ENCODE measurements at regions of chr1 and their contacts with region 1.

Region 1: DNA sequence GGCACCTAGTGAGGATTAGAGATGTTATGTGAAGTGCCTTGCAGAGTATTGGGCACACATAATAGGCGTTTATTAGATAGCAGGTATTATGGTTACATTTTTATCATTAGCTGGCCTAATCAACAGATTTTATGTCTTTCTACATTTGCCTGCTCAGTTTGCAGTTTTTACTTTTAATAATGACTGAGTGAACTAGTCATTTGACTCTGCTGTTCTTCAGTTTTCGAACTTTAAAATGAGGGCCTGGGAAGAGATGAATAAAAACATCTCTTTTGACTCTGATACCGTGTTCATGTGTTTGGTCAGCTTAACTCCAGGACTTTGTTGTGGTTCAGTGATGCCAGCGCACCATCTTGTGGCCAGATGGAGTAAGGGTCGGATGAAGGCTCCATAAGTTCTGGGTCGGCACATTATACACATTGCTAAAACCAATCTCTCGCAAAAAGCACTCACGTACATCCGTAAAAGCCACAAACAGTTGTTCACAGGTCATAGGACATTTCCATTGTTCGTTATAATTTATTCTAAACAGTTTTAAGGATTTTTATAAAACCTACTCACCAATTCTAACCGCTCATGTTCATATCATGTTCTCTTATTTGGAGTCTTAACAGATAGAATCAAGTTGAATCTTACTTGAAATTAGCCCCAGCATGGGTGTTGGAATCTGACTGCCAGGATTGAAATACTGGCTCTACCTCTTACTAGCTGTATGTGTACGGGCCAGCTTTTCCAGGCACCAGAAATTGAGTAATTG is 78.4 kb upstream of the GPR88 start:
- H3K4me3 ChIP-seq: no peak overlapping the region
- H3K27ac ChIP-seq: no peak overlapping the region
- H3K4me1 ChIP-seq: no peaks in the 10 kb centered on the region
- CTCF ChIP-seq: peak; percentile 72

Region 2: GRCh38 chr1:99808391-99809115 is 651.0 kb before region 1 on chr1:
- CTCF ChIA-PET with region 1: interaction called, 14 read pairs
- POLR2A ChIA-PET with region 1: interaction called, 8 read pairs
- H3K4me3 ChIP-seq: no peak overlapping the region
- H3K27ac ChIP-seq: no peak overlapping the region
- H3K4me1 ChIP-seq: no peaks in the 10 kb centered on the region
- CTCF ChIP-seq: peak; percentile 62; the same call in 1 of the 2 replicates

Region 3: GRCh38 chr1:100061681-100062080 is 397.9 kb before region 1 on chr1:
- CTCF ChIA-PET with region 1: no interaction called
- POLR2A ChIA-PET with region 1: no interaction called
- H3K4me3 ChIP-seq: no peak overlapping the region
- H3K27ac ChIP-seq: no peak overlapping the region
- H3K4me1 ChIP-seq: 0 out of 2 replicates have a peak, but pooled peaks cover 5% of the 10 kb centered on the region
- CTCF ChIP-seq: no peak

Region 4: GRCh38 chr1:100430325-100430813 is 29.2 kb before region 1 on chr1:
- CTCF ChIA-PET with region 1: interaction called, 11 read pairs
- POLR2A ChIA-PET with region 1: no interaction called
- H3K4me3 ChIP-seq: no peak overlapping the region
- H3K27ac ChIP-seq: peak overlapping the region; percentile 13; the same call in 1 of the 2 replicates
- H3K4me1 ChIP-seq: no peaks in the 10 kb centered on the region
- CTCF ChIP-seq: no peak

Region 5: DNA sequence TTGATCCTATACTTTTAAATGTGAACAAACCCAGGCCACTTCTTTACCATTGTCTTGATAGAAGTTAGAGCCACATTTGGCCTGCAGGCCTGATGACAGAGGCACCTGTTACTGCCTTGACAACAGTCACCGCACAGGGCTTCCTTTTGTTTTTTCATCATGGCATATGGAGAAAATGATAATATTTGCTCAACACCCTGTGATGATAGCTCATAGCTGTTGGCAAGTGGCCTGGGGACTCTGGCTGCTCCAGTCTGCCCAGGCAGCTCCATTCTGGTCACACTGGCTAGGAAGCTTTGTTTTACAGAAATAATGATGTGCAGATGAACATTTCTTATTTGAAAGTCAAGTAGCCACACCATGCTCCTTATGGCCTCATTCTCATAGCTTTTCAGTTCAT is 11.2 kb before region 1 on chr1:
- CTCF ChIA-PET with region 1: interaction called, 16 read pairs
- POLR2A ChIA-PET with region 1: no interaction called
- H3K4me3 ChIP-seq: no peak overlapping the region
- H3K27ac ChIP-seq: no peak overlapping the region
- H3K4me1 ChIP-seq: no peaks in the 10 kb centered on the region
- CTCF ChIP-seq: no peak

Region 6: GRCh38 chr1:100474834-100475233 is 15.3 kb after region 1 on chr1:
- CTCF ChIA-PET with region 1: interaction called, 11 read pairs
- POLR2A ChIA-PET with region 1: no interaction called
- H3K4me3 ChIP-seq: no peak overlapping the region
- H3K27ac ChIP-seq: no peak overlapping the region
- H3K4me1 ChIP-seq: no peaks in the 10 kb centered on the region
- CTCF ChIP-seq: no peak

Region 7: DNA sequence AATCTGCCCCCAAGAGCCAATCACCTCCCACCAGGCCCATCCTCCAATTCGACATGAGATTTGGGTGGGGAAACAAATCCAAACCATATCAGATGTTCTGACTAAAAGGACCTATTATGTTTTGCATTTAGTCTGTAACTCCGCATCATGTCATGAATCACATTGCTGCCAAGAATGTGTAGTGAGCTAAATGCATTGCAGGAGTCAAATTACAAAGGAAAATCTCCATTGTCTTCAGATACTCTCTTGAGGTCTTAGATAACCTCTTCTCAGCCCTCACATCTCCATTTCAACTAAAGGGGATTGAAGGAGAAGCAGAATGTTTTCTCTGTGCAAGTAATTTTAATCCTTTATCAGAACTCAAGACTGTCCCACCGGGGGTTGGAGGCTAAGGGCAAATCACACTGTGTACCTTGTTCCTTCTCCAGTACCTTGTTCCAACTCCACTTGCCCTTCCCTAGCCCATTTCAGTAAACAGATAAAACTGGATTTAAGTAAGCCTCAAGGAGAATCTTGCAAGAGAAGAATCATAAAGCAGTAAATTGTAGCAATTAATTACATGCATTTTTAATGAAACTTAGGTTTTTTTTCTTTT is 401.0 kb after region 1 on chr1:
- CTCF ChIA-PET with region 1: interaction called, 10 read pairs
- POLR2A ChIA-PET with region 1: no interaction called
- H3K4me3 ChIP-seq: no peak overlapping the region
- H3K27ac ChIP-seq: no peak overlapping the region
- H3K4me1 ChIP-seq: no peaks in the 10 kb centered on the region
- CTCF ChIP-seq: no peak

Region 8: DNA sequence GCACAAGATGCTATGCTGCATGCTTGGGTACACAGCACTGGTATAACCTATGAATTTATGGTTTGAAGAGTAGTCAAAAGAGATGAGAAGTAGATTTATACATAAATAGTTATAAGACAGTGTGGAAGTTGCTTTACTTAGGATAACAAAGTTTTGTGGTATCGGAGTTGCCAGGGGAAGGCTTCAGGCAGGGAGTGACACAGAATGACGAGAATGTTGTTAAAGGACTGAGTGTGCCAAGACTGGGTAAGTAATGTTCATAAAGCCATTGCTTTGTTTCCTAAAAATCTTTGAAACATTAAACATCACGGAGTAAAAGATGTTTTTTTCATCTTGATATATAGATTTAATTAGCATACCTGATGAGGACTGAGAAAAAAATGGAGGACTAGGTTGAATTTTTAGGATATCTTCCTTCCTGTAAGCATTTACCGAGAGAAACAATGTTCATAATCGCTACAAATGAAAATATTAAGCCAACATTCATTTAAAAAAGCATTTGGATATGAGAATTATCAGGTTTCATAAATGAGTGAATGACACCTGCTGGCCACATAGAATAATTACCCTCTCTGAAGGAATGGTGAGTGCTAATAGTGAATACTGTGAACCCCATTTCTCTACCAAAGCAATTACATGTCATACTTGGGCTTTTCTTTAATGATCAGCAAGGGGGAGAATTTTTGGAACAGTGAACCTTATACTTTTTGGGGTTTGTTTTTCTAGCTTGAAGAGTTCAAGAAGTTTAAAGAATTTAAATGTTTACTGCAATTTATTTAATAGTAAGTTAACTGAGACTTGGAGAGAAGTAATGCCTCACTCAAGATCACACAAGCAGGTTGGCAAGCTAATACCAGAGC is 406.7 kb after region 1 on chr1:
- CTCF ChIA-PET with region 1: interaction called, 162 read pairs
- POLR2A ChIA-PET with region 1: no interaction called
- H3K4me3 ChIP-seq: no peak overlapping the region
- H3K27ac ChIP-seq: no peak overlapping the region
- H3K4me1 ChIP-seq: no peaks in the 10 kb centered on the region
- CTCF ChIP-seq: peak; percentile 38; the same call in 1 of the 2 replicates

Measured in HEK293 (cell line).